ENCODE measurements at regions of chr3 and their contacts with region 1.

Region 1: DNA sequence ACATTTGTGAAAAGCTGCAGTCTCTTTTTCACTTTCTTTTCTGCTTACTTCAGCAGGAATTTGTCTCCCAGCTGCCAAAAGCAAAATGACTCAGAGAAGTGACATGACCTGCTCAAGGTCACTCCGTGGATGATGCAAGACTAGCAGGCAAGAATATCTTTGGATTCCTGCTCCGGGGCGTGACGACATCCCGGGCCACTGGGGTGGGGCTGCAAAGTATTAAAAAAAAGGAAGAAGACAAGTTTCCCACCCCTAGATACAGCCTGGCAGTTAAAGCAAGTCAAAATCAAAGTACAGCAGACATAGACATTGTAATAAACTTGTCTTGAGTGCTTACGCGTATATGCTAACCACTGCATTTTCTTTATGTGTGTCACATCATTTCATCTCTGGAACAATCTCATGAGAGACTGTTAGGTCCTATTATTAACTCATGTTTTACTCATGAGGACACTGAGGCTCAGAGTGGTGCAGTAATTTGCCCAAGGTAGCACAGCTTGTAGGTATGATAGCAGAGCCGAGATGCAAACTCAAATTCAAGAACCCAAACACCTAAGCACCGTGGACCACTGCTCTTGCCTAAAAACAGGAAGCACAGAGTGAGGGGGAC is 485.2 kb upstream of the PROK2 start:
- DNase-seq: peak in 1 of 10 donors; percentile 65

Region 2: DNA sequence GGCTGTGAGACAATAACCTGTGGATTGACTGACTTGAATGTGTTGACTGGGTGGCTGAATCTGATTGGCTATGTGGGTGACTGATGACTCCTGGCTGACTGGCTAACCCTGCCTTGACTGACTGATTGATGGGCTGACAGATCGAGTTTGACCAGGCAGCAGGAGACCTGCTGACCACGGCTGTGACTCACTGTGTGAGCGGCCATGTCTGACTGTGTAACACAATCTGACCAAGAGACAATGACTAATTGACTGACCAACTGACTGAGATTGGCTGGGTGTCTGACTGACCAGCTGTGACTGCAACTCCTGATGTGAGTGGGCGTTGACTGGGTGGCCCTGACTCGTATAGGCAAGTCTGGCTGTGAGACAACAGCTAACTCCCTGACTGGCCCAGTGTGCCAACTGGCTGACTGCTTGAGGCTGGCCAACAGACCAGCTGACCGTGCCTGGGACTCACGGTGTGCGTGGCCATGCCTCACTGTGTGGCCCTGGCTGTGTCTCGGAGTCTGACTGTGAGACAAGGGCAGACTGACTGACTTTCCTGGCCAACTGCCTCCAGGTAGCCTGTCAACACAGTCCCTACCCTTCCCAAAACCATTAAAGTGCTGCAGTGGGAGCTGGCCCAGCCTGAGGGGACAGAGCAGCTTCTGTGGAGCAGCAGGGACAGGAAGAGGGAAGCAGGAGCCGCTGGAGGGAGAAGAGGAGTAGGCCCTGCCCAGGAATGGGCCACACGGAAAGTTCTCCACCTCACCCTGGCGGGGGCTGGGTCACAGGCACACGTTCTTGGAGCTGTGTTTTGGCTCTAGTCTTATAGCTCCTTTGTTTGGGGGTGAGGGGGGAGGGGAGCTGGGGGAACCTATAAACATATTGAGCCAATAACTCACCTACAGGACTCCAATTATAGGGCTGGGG is 69.2 kb after region 1 on chr3:
- intact Hi-C with region 1: loop called (anchors 10 kb)
- DNase-seq: peak in 3 of 10 donors; percentile 20 to 87 (median 30)

Region 3: GRCh38 chr3:72447059-72447946 is 177.1 kb after region 1 on chr3:
- intact Hi-C with region 1: loop called (anchors 5 kb)
- DNase-seq: peak; percentile 83 to 99 (median 88)

Measured in posterior cingulate gyrus (tissue), 11 donors.